ENCODE measurements at regions of chr7 and their contacts with region 1.

Region 1: GRCh38 chr7:100342765-100343164 is 15.2 kb upstream of the PILRB start:
- DNase-seq: peak in 1 of 2 donors; percentile 62
- ATAC-seq: peak; percentile 51 to 72
- H3K4me3 ChIP-seq: no peak overlapping the region
- H3K27ac ChIP-seq: peak overlapping the region; percentile 83 to 90 (median 87)
- H3K4me1 ChIP-seq: peaks cover 34 to 37% of the 10 kb centered on the region in 2 donors
- H3K27me3 ChIP-seq: no peaks in the 10 kb centered on the region
- CTCF ChIP-seq: no peak
- POLR2A ChIP-seq: no peak

Region 2: GRCh38 chr7:100148559-100149350 is 194.0 kb before region 1 on chr7 and contains the start of gene LAMTOR4:
- in situ Hi-C with region 1: loop called in 2 of 4 experiments (anchors 25 kb)
- intact Hi-C with region 1: no loop called
- DNase-seq: peak; percentile 99 to 100
- ATAC-seq: peak; percentile 100
- H3K4me3 ChIP-seq: peak within 1 kb of the TSS; percentile 81 to 97 (median 96)
- H3K27ac ChIP-seq: peak within 1 kb of the TSS; percentile 85 to 93 (median 90)
- H3K4me1 ChIP-seq: peaks cover 10% of the 10 kb centered on the region in 2 donors
- H3K27me3 ChIP-seq: no peaks in the 10 kb centered on the region
- CTCF ChIP-seq: peak in 1 of 5 experiments; percentile 32
- POLR2A ChIP-seq: peak; percentile 65 to 88
- total RNA-seq, gene LAMTOR4: 97.6 to 141 (median 127) TPM

Region 3: GRCh38 chr7:100158229-100159098 is 184.3 kb before region 1 on chr7 and contains the start of gene TRAPPC14:
- in situ Hi-C with region 1: loop called in 1 of 4 experiments (anchors 25 kb)
- intact Hi-C with region 1: no loop called
- DNase-seq: peak; percentile 70 to 75
- ATAC-seq: peak; percentile 82 to 84
- H3K4me3 ChIP-seq: peak within 1 kb of the TSS; percentile 67 to 90 (median 70)
- H3K27ac ChIP-seq: peak within 1 kb of the TSS; percentile 60 to 86 (median 72)
- H3K4me1 ChIP-seq: peaks cover 6 to 17% of the 10 kb centered on the region in 2 donors
- H3K27me3 ChIP-seq: no peaks in the 10 kb centered on the region
- CTCF ChIP-seq: no peak
- POLR2A ChIP-seq: peak in 1 of 2 donors; percentile 42
- total RNA-seq, gene TRAPPC14: 3.0 to 6.1 (median 4.2) TPM

Region 4: GRCh38 chr7:100215895-100216294 is 126.9 kb before region 1 on chr7:
- in situ Hi-C with region 1: no loop called
- intact Hi-C with region 1: loop called (anchors 10 kb)
- DNase-seq: peak in 1 of 2 donors; percentile 65
- ATAC-seq: peak; percentile 54 to 55
- H3K4me3 ChIP-seq: no peak overlapping the region
- H3K27ac ChIP-seq: peak overlapping the region in 3 of 4 donors; percentile 11 to 60 (median 50)
- H3K4me1 ChIP-seq: peaks cover 12% of the 10 kb centered on the region in 2 donors
- H3K27me3 ChIP-seq: no peaks in the 10 kb centered on the region
- CTCF ChIP-seq: no peak
- POLR2A ChIP-seq: no peak

Region 5: DNA sequence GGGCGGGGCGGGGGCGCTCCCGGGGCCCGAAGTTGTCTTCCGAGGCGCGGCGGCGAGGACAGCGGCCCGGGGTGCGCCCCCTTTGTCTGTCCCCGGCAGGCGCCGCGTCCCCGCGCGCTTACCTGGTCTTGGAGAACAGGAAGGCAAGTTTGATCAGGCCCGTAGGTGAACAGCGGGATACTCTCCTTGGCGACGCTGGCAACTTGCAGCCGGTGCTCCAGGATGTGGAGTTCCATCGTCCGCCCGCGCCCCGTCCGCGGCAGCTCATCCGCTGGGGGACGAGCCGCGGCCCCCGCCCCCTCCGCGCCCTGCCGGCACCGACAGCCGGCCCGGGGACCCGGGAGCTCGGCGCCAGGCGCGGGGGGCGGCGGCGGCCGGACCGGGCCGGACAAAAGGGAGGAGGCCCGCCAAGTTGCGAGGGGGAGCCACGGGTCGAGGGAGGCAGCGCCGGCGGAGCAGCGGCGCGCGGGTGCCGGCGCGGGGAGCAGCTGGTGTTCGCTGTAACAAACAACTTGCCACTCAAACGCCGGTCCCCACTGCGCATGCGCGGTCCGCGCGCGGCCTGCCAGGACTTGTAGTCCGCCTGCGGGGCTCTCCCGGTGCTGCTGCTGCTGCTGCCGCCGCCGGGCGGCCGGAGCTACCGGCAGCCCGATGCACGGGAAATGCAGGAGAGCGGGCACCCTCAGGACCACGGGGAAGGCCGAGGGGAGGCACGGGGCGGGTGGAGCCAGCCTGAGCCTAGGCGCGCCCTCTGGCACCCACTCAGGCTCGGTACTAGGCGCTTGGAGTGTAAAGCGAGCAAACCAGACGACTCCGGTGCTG is 70.8 kb before region 1 on chr7:
- in situ Hi-C with region 1: no loop called
- intact Hi-C with region 1: loop called (anchors 10 kb)
- DNase-seq: peak; percentile 98 to 99
- ATAC-seq: peak; percentile 70 to 79
- H3K4me3 ChIP-seq: peak overlapping the region; percentile 73 to 88 (median 77)
- H3K27ac ChIP-seq: peak overlapping the region; percentile 91 to 98 (median 96)
- H3K4me1 ChIP-seq: peaks cover 30 to 35% of the 10 kb centered on the region in 2 donors
- H3K27me3 ChIP-seq: no peaks in the 10 kb centered on the region
- CTCF ChIP-seq: peak; percentile 57 to 66 (median 64)
- POLR2A ChIP-seq: peak; percentile 95 to 96

Region 6: DNA sequence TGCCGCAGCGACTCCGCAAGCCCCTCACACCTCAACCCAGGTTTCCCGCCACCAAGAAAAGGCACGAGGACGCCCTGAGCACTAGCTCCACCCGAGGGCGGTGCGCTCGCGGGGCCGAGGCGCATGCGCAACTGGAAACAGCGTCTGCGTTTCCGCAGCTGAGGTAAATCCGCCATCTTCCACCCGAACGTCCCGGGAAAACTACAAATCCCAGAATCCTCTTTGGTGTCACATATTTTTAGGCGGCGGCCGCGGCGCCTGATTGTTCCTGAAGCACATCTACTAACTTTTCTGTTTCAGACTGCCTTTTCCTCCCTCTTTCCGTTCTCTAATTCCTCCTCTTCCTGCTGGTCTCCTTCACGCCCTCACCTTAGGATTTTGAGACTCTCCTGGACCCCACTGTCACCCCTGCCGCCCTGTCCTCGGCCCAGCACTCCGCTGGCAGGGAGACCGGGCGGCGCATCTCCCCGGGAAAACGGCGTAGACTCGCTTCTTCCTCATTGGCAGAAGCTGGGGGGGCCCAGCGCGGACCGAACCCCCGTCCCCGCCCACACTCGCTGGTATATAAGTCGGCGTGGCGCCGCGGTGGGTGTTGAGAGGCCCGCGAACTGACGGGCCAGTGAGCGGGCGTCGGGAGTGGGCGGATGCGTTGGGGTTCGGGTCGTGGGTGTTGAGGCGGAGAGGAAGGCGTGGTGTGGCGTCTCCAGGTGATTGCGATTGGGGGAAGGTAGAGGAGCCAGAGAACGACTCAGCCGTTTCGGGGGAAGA is 85.6 kb after region 1 on chr7 and contains the start of gene ZCWPW1:
- in situ Hi-C with region 1: no loop called
- intact Hi-C with region 1: loop called (anchors 5 kb)
- DNase-seq: peak; percentile 90 to 95
- ATAC-seq: peak; percentile 67 to 68
- H3K4me3 ChIP-seq: peak within 1 kb of the TSS; percentile 74 to 88 (median 83)
- H3K27ac ChIP-seq: peak within 1 kb of the TSS; percentile 90 to 99 (median 98)
- H3K4me1 ChIP-seq: peaks cover 24 to 29% of the 10 kb centered on the region in 2 donors
- H3K27me3 ChIP-seq: no peaks in the 10 kb centered on the region
- CTCF ChIP-seq: peak in 2 of 5 experiments; percentile 5 to 17
- POLR2A ChIP-seq: peak; percentile 98 to 99
- total RNA-seq, gene ZCWPW1: 1.6 to 8.5 (median 2.7) TPM

Region 7: GRCh38 chr7:100483101-100483721 is 140.4 kb after region 1 on chr7:
- in situ Hi-C with region 1: no loop called
- intact Hi-C with region 1: no loop called
- DNase-seq: peak in 1 of 2 donors; percentile 34
- ATAC-seq: peak in 1 of 2 donors; percentile 28
- H3K4me3 ChIP-seq: peak overlapping the region; percentile 54 to 88 (median 60)
- H3K27ac ChIP-seq: no peak overlapping the region
- H3K4me1 ChIP-seq: peaks cover 11 to 12% of the 10 kb centered on the region in 2 donors
- H3K27me3 ChIP-seq: no peaks in the 10 kb centered on the region
- CTCF ChIP-seq: peak; percentile 79 to 99 (median 98)
- POLR2A ChIP-seq: no peak

Measured in gastrocnemius medialis (tissue), 4 donors.